RWPE1 (cell line): ENCODE measurements at regions of chr12 and their contacts with region 1.

Region 1: DNA sequence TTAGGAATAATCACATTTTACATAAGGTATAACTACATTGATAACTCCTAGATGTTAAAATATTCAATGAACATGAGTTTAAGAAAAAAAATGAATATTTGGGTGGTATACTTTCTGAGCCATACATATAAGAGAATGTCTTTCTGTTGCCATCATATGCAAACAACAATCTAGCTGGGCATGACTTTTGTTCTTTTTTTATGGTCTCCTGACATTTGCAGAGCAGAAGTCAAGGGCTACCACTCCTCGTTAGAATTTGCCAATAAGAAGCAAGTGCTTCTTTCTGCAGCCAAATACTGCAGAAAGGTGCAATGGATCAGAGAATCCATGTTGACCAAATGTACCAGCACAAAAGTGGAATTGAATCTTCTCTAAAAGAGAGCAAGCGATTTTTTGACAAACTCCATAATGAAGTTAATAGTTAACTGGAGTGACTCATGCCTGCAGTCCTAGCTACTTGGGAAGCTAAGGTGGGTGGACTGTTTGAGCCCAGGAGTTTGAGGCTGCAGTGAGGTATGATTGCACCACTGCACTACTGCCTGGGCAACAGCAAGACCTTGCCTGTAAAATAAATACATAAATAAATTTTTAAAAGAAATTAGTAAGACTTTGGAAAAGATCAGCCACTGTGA is 25.5 kb upstream of the CCDC91 start:
- DNase-seq: no peak
- H3K27ac ChIP-seq: no peak overlapping the region
- CTCF ChIP-seq: no peak

Region 2: GRCh38 chr12:27778206-27778605 is 386.6 kb before region 1 on chr12:
- CTCF ChIA-PET with region 1: interaction called, 10 read pairs
- POLR2A ChIA-PET with region 1: no interaction called
- DNase-seq: no peak
- H3K27ac ChIP-seq: no peak overlapping the region
- CTCF ChIP-seq: no peak

Region 3: GRCh38 chr12:28108599-28108998 is 56.2 kb before region 1 on chr12:
- CTCF ChIA-PET with region 1: no interaction called
- POLR2A ChIA-PET with region 1: no interaction called
- DNase-seq: no peak
- H3K27ac ChIP-seq: no peak overlapping the region
- CTCF ChIP-seq: no peak